BJ (cell line): ENCODE measurements at regions of chr1 and their contacts with region 1.

Region 1: GRCh38 chr1:230867903-230868735 is at the start of gene C1orf198:
- DNase-seq: no peak
- H3K4me3 ChIP-seq: peak within 1 kb of the TSS; percentile 76
- H3K27me3 ChIP-seq: no peaks in the 10 kb centered on the region
- CTCF ChIP-seq: no peak
- polyA plus RNA-seq, gene C1orf198: 186 and 195 TPM in 2 replicates

Region 2: GRCh38 chr1:230902349-230902923 is 34.3 kb after region 1 on chr1:
- CTCF ChIA-PET with region 1: interaction called, 3 read pairs
- POLR2A ChIA-PET with region 1: interaction called, 10 read pairs
- DNase-seq: no peak
- H3K4me3 ChIP-seq: no peak overlapping the region
- H3K27me3 ChIP-seq: no peaks in the 10 kb centered on the region
- CTCF ChIP-seq: no peak